HEK293 (cell line): ENCODE measurements at regions of chr10 and their contacts with region 1.

Region 1: DNA sequence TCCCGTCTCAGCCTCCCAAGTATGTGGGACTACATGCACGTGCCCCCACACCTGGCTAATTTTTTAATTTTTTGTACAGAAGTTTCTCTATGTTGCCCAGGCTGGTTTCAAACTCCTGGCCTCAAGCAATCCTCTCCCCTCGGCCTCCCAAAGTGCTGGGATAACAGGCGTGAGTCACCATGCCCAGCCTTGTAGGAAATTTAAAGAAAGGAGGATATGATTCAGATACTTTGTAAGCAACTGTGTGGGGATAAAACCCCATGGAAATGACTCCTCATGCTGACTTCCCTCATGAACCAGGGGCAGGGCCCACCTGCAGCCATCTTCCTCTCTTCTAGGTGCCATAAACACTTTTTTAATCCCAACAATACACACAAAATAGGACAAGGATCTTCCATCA is 50.2 kb downstream of the APBB1IP start:
- H3K4me3 ChIP-seq: no peak overlapping the region
- H3K27ac ChIP-seq: no peak overlapping the region
- H3K4me1 ChIP-seq: no peaks in the 10 kb centered on the region
- CTCF ChIP-seq: no peak

Region 2: GRCh38 chr10:26503911-26504310 is 15.6 kb after region 1 on chr10:
- CTCF ChIA-PET with region 1: interaction called, 16 read pairs
- POLR2A ChIA-PET with region 1: no interaction called
- H3K4me3 ChIP-seq: no peak overlapping the region
- H3K27ac ChIP-seq: no peak overlapping the region
- H3K4me1 ChIP-seq: no peaks in the 10 kb centered on the region
- CTCF ChIP-seq: no peak

Region 3: DNA sequence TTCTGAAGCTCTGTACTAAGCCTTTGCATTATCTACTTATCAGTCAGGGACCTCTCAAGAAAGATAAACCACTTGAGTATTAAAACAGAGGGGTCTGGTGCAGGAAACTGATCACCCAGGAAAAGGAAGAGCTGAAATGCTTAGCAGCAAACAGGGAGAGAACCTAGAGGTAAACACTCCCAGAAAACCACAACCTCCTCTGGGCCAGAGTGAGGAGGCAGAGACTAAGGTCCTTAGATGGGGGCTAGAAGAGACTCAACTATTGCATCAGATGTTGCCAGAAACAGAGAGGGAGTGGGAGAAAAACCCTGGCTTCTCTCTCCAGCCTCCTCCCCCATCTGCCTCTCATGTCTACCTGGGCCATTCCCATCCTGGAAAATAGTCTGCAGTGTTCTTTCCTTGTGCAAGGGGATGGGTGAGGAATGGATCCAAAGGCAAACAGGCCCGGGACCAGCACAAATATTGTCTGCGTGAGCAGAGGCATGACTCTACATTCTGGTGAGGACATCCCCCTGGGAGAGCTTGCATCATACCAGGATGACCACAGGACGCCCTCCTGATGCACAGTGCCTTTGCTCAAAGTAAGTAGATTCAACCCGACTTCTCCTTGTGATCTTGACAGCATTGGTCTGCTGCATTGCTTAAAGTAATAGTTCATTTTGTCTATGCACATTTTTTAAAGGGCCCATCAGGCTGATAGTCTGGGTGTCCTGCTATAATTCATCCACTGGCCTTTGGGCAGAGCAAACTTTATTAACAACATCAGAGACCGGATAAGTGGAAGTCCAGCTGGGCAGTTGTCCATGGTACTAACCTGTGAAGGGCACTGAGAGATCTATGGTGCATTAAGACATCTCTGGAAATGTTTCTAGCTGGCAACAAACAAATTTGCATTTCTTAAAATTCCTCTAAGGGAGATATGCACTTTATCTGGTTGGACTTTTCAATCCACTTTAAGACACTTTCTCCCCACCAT is 1532.9 kb after region 1 on chr10:
- CTCF ChIA-PET with region 1: no interaction called
- POLR2A ChIA-PET with region 1: no interaction called
- H3K4me3 ChIP-seq: no peak overlapping the region
- H3K27ac ChIP-seq: no peak overlapping the region
- H3K4me1 ChIP-seq: no peaks in the 10 kb centered on the region
- CTCF ChIP-seq: no peak